ENCODE measurements at regions of chr17 and their contacts with region 1.

Region 1: DNA sequence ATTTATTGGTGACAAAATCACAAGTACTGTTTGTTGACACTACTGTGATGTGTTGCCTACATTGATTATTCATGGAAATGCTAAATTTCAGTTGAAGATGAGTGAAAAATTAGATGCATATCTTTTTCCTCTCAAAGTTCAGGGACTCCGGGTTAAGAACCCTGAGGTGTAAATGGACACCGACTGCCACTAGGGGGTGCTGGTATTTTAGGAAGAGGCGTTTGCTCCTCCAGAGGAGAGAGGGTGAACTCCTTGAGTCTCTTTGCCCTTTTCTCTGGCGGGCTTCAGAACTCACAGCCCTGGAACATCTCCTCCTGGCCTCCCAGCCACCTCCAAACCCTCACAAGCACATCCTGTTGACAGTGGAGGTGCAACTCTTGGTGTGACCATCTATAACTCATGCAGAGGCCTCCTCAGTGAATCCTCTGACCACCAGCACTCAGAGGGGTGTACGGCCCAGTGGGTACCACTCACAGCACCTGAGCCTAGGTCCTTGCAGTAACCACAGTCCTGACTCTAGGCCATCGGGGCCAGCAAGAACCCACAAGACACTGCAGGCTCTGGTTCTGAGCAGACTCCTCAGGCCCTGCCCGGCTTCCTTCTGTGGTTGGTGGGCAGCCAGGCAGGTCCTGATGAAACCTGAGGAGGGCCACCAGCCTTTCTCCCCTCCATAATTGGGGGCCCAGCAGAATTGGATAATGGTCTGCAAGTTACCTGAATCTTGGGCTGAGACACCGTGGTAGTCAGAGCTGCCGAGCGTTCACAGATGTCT is 26.2 kb upstream of the PIK3R5 start:
- DNase-seq: no peak

Region 2: DNA sequence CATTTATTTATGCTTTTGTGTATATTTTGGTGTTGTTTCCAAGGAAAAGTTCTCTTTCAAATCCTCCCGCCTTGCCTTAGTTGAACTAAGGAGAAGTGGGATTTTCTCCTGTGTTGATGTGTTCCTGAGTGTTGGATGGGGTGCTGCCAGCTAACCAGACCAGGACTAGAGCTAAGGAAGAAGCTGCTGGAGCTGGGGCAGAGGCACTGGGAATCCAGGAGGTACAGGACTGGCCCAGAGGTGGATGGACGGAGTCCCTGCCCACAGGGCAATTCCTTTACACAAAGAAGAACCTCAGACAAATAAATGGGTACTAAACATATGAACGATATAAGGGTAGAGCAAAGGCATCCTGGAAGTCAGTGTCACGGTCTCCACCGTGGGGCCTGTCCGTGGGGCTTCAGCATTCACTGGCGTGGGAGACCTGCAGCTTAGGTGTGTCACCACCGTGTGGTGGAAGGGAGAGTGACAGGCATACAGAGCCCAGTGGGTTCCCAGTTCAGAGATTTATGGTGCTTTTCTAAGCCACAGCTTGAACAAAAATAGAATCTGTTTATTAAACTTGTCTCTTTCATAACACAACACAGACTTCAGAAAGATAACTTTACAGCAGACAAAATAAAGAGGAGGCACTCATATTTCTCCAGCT is 300.3 kb after region 1 on chr17:
- intact Hi-C with region 1: loop called in 1 of 2 experiments (anchors 10 kb)
- DNase-seq: no peak

Measured in posterior vena cava (tissue), 2 donors.